Activated T-helper 1 cell treated with anti-CD3 and anti-CD28 coated beads, Interleukin-12 subunit alpha, Interleukin-12 subunit beta, Interleukin-2, Interleukin-4 antibody, amounts not matched to agents 30 ng/mL and 10 ng/mL and 1 ng/mL, durations not matched to agents 14 hours and 24 hours and 36 hours (primary cell): ENCODE measurements at regions of chr12 and their contacts with region 1.

Region 1: DNA sequence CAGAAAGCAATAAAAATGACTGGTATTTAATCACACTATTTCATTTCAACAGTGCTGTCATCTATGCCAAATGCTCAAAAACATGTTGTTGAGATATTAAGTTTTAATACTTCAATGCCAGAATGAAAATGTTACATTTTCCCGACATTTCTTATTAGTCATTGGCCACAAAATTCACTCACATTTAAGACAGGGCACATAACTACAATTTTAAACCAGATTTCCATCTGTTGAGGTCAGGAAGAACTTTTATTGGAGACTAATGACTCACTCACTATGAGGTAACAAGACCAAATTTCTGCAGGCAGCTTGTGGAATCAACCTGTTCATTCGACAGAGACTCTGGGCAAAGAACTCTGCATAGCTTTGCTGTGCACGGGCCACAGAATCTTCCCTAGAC is 36.8 kb downstream of the PPTC7 start:
- DNase-seq: no peak
- H3K4me3 Mint-ChIP-seq: no peak overlapping the region
- H3K27ac Mint-ChIP-seq: no peak overlapping the region
- H3K4me1 Mint-ChIP-seq: peaks cover 52% of the 10 kb centered on the region
- H3K27me3 Mint-ChIP-seq: no peaks in the 10 kb centered on the region

Region 2: DNA sequence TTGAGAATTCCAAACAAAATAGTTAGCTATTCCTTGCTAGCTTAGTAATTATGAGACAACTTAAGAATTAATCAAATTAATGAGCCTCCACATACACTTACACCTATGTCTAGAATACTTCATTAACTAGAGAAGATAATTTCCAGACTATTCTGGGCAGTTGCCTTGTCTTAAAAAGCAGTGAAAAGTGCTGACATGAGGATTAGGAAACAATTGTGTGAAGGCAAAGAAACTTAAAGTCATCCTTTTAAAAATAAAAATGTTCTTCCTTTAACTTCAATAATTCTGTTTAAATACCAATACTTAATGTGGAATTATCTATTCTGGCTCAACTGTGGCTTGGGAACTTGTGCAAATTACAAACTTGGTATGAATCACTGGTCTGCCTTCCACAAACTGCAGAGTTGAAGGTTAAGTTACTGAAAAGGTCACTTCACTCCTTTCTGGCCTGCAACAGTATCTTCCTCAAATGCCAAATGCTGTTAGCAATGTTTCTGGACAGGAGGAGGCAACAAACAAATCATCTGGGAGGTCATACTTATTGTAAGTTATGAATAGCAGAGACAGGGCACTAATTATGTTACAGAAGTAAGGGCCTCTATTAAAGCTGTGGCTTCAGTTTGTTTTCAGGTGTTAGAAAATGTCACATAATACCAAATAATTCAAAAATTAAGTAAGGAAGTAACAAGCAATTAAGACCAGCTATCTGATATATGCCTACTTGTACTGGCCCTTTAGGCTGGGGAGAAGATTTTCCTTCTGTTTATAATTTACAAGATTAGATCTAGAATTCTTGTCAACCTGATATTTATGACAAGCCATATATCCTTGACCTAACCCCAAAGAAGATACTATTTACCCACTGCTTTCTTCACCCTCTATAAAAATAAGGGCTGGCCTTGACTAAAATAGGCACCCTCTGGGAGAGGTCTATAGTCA is 17.6 kb after region 1 on chr12:
- intact Hi-C with region 1: loop called (anchors 2 kb)
- DNase-seq: no peak
- H3K4me3 Mint-ChIP-seq: peak overlapping the region; percentile 4
- H3K27ac Mint-ChIP-seq: peak overlapping the region; percentile 72
- H3K4me1 Mint-ChIP-seq: peaks cover 58% of the 10 kb centered on the region
- H3K27me3 Mint-ChIP-seq: no peaks in the 10 kb centered on the region